ENCODE measurements at regions of chr3 and their contacts with region 1.

Region 1: GRCh38 chr3:71064288-71064955 is 519.1 kb downstream of the FOXP1 start:
- DNase-seq: peak; percentile 68
- ATAC-seq: peak; percentile 35
- H3K4me3 ChIP-seq: peak overlapping the region; percentile 57
- H3K27ac ChIP-seq: peak overlapping the region; percentile 94
- H3K4me1 ChIP-seq: peaks cover 11% of the 10 kb centered on the region
- H3K27me3 ChIP-seq: no peaks in the 10 kb centered on the region
- CTCF ChIP-seq: no peak
- POLR2A ChIP-seq: peak; percentile 71
- RAD21 ChIP-seq: no peak

Region 2: DNA sequence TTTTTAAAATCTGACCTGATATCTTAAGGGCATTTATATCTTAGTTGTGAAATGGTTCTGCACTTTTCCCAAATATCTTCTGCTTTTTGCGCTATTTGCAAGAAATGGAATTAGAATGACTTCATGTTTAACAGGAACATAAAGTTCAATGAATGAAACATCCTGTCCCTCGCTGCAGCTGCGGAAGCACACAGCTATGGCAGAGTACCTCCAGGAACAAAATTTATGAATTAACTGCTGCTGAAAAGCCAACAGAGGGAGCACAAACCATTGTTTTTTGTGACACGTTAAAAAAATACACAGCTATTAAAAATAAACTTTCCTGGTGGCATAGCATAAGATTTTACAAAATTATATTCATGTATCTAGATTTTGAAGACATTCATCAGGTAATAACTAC is 347.6 kb before region 1 on chr3:
- CTCF ChIA-PET with region 1: no interaction called
- POLR2A ChIA-PET with region 1: no interaction called
- dilution Hi-C with region 1: no loop called
- in situ Hi-C with region 1: no loop called
- intact Hi-C with region 1: loop called (anchors 5 kb)
- DNase-seq: peak; percentile 48
- ATAC-seq: peak; percentile 69
- H3K4me3 ChIP-seq: no peak overlapping the region
- H3K27ac ChIP-seq: no peak overlapping the region
- H3K4me1 ChIP-seq: no peaks in the 10 kb centered on the region
- H3K27me3 ChIP-seq: no peaks in the 10 kb centered on the region; the same call in 1 of the 2 replicates
- CTCF ChIP-seq: peak; percentile 52
- POLR2A ChIP-seq: no peak
- RAD21 ChIP-seq: peak; percentile 58

Region 3: DNA sequence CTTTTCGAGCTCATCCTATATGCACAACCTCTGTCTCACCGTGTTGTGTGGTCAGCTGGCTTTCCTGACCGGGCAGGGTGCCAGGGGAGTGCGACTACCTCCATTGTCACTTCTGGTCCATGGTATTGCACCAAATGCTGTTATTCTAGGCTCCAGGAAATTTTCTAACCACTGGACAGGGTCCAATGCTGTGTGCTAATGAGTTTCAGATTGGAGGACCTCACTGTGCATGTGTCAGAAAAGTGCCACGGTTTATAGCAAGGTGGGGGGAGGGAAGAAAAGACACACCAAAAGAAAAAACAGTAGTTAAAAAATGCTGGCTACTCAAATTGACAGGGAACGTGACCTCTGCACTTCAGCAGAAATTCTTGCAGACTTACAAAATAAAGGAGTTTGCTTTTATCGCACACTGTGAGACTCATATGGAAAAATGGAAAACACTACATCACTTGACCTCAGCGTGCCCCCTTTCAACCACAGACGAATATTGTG is 39.1 kb after region 1 on chr3:
- CTCF ChIA-PET with region 1: interaction called, 3 read pairs
- POLR2A ChIA-PET with region 1: no interaction called
- dilution Hi-C with region 1: no loop called
- in situ Hi-C with region 1: no loop called
- intact Hi-C with region 1: loop called (anchors 1 kb)
- DNase-seq: peak; percentile 62
- ATAC-seq: no peak
- H3K4me3 ChIP-seq: no peak overlapping the region
- H3K27ac ChIP-seq: peak overlapping the region; percentile 75
- H3K4me1 ChIP-seq: peaks cover 34% of the 10 kb centered on the region
- H3K27me3 ChIP-seq: no peaks in the 10 kb centered on the region
- CTCF ChIP-seq: no peak
- POLR2A ChIP-seq: no peak
- RAD21 ChIP-seq: no peak

Region 4: GRCh38 chr3:71226565-71227269 is 162.3 kb after region 1 on chr3:
- CTCF ChIA-PET with region 1: no interaction called
- POLR2A ChIA-PET with region 1: no interaction called
- dilution Hi-C with region 1: no loop called
- in situ Hi-C with region 1: no loop called
- intact Hi-C with region 1: loop called (anchors 5 kb)
- DNase-seq: peak; percentile 82
- ATAC-seq: peak; percentile 55
- H3K4me3 ChIP-seq: peak overlapping the region; percentile 35
- H3K27ac ChIP-seq: peak overlapping the region; percentile 97
- H3K4me1 ChIP-seq: peaks cover 22% of the 10 kb centered on the region
- H3K27me3 ChIP-seq: no peaks in the 10 kb centered on the region
- CTCF ChIP-seq: no peak
- POLR2A ChIP-seq: 0 out of 2 replicates have a peak, but pooled peaks have one; percentile 13
- RAD21 ChIP-seq: no peak